ENCODE measurements at regions of chr13 and their contacts with region 1.

Region 1: DNA sequence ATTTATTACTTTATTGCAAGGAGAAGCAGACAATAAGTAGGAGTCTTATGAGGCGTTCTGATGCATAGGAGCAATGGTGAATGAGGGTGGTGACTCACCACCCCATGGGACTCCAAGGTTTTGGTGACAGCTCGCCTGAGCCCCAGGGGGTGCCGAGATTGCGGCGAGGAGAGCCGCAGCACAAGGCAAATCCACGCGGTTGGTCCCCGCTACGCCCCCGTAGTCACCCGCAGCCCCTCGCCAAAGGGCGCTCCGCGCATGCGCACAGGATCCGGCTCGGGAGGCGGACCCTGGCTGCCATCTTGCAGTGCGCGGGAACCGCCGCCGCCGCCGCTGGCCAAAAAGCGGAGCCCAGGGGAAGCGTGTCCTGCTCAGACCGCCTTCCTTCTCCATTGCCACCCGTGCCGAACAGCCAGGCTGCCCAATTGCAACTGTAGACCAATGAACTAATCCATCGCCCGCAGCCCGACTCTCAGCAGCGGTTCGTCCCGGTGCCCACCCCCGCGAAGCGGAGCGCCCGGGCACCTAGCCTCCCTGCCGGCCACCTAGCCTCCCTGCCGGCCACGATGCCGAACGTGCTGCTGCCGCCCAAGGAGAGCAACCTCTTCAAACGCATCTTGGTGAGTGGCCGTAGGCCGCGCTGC is at the start of gene NAA16:
- DNase-seq: peak; percentile 98
- ATAC-seq: peak; percentile 92
- H3K4me3 Mint-ChIP-seq: peak within 1 kb of the TSS; percentile 96
- H3K27ac Mint-ChIP-seq: peak within 1 kb of the TSS; percentile 90
- H3K4me1 Mint-ChIP-seq: peaks cover 44% of the 10 kb centered on the region
- H3K27me3 Mint-ChIP-seq: no peaks in the 10 kb centered on the region
- CTCF ChIP-seq: no peak
- total RNA-seq, gene NAA16: 18.5 and 21.4 TPM in 2 replicates

Region 2: GRCh38 chr13:40770934-40771618 is 540.0 kb before region 1 on chr13 and contains the start of gene MRPS31:
- CTCF ChIA-PET with region 1: no interaction called
- POLR2A ChIA-PET with region 1: no interaction called
- intact Hi-C with region 1: loop called (anchors 5 kb)
- DNase-seq: peak; percentile 94
- ATAC-seq: peak; percentile 100
- H3K4me3 Mint-ChIP-seq: peak within 1 kb of the TSS; percentile 98
- H3K27ac Mint-ChIP-seq: peak within 1 kb of the TSS; percentile 94
- H3K4me1 Mint-ChIP-seq: peaks cover 30% of the 10 kb centered on the region
- H3K27me3 Mint-ChIP-seq: no peaks in the 10 kb centered on the region
- CTCF ChIP-seq: no peak
- total RNA-seq, gene MRPS31: 29.4 and 30.5 TPM in 2 replicates

Region 3: GRCh38 chr13:41019011-41019487 is 292.0 kb before region 1 on chr13 and contains the start of gene ELF1:
- CTCF ChIA-PET with region 1: no interaction called
- POLR2A ChIA-PET with region 1: no interaction called
- intact Hi-C with region 1: loop called (anchors 2 kb)
- DNase-seq: peak; percentile 26
- ATAC-seq: peak; percentile 87
- H3K4me3 Mint-ChIP-seq: peak within 1 kb of the TSS; percentile 94
- H3K27ac Mint-ChIP-seq: peak within 1 kb of the TSS; percentile 99
- H3K4me1 Mint-ChIP-seq: peaks cover 46% of the 10 kb centered on the region
- H3K27me3 Mint-ChIP-seq: no peaks in the 10 kb centered on the region
- CTCF ChIP-seq: no peak
- total RNA-seq, gene ELF1: 129 and 136 TPM in 2 replicates

Region 4: DNA sequence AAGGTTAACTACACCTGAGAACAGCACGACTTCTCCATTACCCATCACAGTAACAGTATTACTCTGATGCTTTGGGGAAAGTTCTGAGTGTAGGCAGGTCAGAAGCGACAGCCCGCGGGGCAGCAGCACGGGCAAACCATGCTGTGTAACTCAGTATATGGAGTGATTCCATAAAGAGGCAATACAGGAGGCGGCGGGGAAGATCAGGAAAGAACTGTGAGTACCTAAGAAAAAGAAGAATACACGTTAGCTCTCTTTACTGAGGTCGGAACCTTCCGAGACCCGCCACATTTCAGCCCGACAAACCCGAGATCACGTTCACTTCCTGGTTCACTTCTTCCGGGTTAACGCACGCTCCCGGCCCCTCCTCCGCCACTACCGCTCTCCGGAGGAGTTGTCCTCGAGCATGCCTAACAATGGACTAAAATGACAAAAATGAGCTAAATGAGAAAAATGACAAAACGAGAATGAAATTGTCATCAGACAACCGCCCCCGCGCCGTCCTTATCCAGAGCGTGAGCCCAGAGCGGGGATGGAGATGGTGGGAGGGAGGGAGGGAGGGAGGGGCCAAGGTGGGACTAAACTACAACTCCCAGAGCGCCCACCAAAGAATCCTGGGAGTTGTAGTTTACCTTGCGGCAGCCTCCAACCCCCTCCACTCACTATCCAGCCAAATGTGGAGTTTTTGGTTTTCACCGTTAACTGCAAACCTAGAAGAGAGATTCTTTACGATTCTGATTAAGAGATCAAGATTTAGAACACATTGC is 47.6 kb before region 1 on chr13 and contains the start of gene MTRF1:
- CTCF ChIA-PET with region 1: no interaction called
- POLR2A ChIA-PET with region 1: interaction called, 4 read pairs
- intact Hi-C with region 1: loop called (anchors 1 kb)
- DNase-seq: peak; percentile 72
- ATAC-seq: peak; percentile 93
- H3K4me3 Mint-ChIP-seq: peak within 1 kb of the TSS; percentile 96
- H3K27ac Mint-ChIP-seq: peak within 1 kb of the TSS; percentile 99
- H3K4me1 Mint-ChIP-seq: peaks cover 17% of the 10 kb centered on the region
- H3K27me3 Mint-ChIP-seq: no peaks in the 10 kb centered on the region
- CTCF ChIP-seq: no peak
- total RNA-seq, gene MTRF1: 22.2 and 26.7 TPM in 2 replicates

Region 5: DNA sequence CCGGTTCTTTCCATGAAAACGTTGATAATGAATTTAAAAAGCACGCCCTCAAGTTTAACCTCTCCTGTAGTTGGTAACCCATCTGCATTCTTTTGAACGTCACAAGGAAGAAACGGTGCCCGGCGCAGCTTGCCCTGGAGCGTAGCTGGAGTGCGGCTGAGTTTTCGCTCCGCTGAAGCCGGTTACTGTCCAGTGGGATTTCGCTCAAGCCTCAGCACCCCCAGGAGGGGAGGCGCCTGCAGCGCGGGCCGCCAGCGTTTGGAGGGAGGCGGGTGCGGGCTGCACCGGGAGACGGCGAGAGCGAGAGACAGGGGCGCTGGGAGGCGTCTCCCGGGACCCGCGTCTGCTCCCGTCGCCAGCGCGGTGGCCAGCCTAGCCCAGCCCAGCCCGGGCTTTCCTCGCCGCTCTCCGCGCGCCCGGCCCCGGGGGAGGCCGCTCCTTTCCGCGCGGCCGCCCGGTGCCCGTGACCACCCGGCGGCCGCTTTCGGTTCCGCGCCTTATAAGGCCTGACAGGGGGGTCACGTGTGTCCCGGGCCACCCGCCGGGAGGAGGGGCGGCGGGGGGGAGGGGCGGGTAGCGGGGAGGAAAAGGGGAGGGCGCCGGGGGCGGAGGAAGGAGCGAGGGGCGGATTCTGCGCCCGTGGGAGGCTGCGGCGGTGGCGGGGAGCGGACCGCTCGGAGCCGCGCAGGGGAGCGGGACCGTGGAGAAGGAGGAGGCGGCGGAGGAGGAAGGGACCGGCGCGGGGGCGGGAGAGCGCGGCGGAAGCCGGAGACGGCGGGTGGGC is 729.1 kb after region 1 on chr13:
- CTCF ChIA-PET with region 1: no interaction called
- POLR2A ChIA-PET with region 1: no interaction called
- intact Hi-C with region 1: loop called (anchors 2 kb)
- DNase-seq: peak; percentile 78
- ATAC-seq: peak; percentile 82
- H3K4me3 Mint-ChIP-seq: peak overlapping the region; percentile 90
- H3K27ac Mint-ChIP-seq: peak overlapping the region; percentile 84
- H3K4me1 Mint-ChIP-seq: peaks cover 16% of the 10 kb centered on the region
- H3K27me3 Mint-ChIP-seq: peaks cover 6% of the 10 kb centered on the region
- CTCF ChIP-seq: no peak

Region 6: GRCh38 chr13:42977219-42977659 is 1666.2 kb after region 1 on chr13:
- CTCF ChIA-PET with region 1: no interaction called
- POLR2A ChIA-PET with region 1: no interaction called
- intact Hi-C with region 1: loop called (anchors 5 kb)
- DNase-seq: no peak
- ATAC-seq: peak; percentile 97
- H3K4me3 Mint-ChIP-seq: peak overlapping the region; percentile 7
- H3K27ac Mint-ChIP-seq: peak overlapping the region; percentile 42
- H3K4me1 Mint-ChIP-seq: peaks cover 25% of the 10 kb centered on the region
- H3K27me3 Mint-ChIP-seq: no peaks in the 10 kb centered on the region
- CTCF ChIP-seq: no peak